ENCODE measurements at regions of chr15 and their contacts with region 1.

Region 1: GRCh38 chr15:85742186-85742821 is 52.4 kb downstream of the KLHL25 start:
- DNase-seq: no peak
- H3K4me3 ChIP-seq: no peak overlapping the region
- H3K27ac ChIP-seq: no peak overlapping the region
- H3K4me1 ChIP-seq: peaks cover 0 to 4% (median 0%) of the 10 kb centered on the region in 4 experiments; a peak in 2 of 7 replicates
- H3K27me3 ChIP-seq: no peaks in the 10 kb centered on the region
- CTCF ChIP-seq: no peak
- EP300 ChIP-seq: no peak
- POLR2A ChIP-seq: 0 out of 3 replicates have a peak, but pooled peaks of 1 of the 2 experiments have one; percentile 25
- RAD21 ChIP-seq: no peak

Region 2: GRCh38 chr15:85692873-85693272 is 49.4 kb before region 1 on chr15:
- CTCF ChIA-PET with region 1: no interaction called
- POLR2A ChIA-PET with region 1: no interaction called
- DNase-seq: no peak
- H3K4me3 ChIP-seq: no peak overlapping the region
- H3K27ac ChIP-seq: no peak overlapping the region
- H3K4me1 ChIP-seq: peaks cover 0 to 6% (median 6%) of the 10 kb centered on the region in 4 experiments; a peak in 4 of 7 replicates
- H3K27me3 ChIP-seq: no peaks in the 10 kb centered on the region
- CTCF ChIP-seq: no peak
- EP300 ChIP-seq: no peak
- POLR2A ChIP-seq: no peak
- RAD21 ChIP-seq: no peak

Region 3: DNA sequence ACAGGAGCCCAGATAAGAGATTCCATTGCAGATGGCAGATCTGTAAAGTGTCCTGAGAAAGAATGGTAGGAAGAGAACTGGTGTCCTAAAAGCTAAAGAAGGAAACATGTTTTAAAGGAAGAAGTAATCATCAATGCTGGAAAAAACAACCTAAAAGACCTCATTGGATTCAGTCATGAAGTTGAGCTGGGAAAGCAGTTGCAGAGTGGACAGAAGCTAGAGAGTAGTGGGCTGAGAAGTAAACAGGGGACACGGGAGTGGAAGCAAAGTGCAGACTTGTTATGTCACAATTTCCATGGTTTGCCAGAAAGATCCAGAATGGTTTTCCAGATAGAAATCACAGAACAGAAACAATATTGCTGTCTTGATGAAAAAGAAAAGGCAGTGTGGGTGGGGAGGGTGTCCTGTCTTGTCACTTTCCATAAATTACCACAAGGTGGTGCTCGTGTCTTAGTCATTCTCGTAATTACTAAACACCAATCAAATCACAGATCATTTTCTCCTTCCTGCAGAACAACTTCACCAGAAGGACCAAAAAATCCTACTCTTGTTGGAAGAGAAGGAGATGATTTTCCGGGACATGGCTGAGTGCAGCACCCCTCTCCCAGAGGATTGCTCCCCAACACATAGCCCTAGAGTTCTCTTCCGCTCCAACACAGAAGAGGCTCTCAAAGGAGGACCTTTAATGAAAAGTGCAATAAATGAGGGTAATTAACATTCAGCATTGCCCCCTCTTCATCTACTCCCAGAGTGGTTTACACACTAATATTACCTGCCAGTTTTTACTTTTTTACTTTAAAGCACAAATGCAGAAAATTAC is 12.1 kb before region 1 on chr15:
- CTCF ChIA-PET with region 1: interaction called, 20 read pairs
- POLR2A ChIA-PET with region 1: interaction called, 3 read pairs
- DNase-seq: no peak
- H3K4me3 ChIP-seq: no peak overlapping the region
- H3K27ac ChIP-seq: no peak overlapping the region
- H3K4me1 ChIP-seq: no peaks in the 10 kb centered on the region
- H3K27me3 ChIP-seq: no peaks in the 10 kb centered on the region
- CTCF ChIP-seq: peak in 2 of 3 experiments; percentile 53 to 74; a peak in 2 of 4 replicates
- EP300 ChIP-seq: no peak
- POLR2A ChIP-seq: no peak
- RAD21 ChIP-seq: peak; percentile 82 to 88

Region 4: GRCh38 chr15:85760531-85761371 is 18.4 kb after region 1 on chr15:
- CTCF ChIA-PET with region 1: no interaction called
- POLR2A ChIA-PET with region 1: no interaction called
- DNase-seq: no peak
- H3K4me3 ChIP-seq: no peak overlapping the region
- H3K27ac ChIP-seq: no peak overlapping the region
- H3K4me1 ChIP-seq: peaks cover 0 to 1% (median 0%) of the 10 kb centered on the region in 4 experiments; a peak in 2 of 7 replicates
- H3K27me3 ChIP-seq: no peaks in the 10 kb centered on the region
- CTCF ChIP-seq: no peak
- EP300 ChIP-seq: no peak
- POLR2A ChIP-seq: no peak
- RAD21 ChIP-seq: peak in 1 of 2 experiments; percentile 37; a peak in 2 of 4 replicates

Region 5: GRCh38 chr15:85831415-85832113 is 89.3 kb after region 1 on chr15:
- CTCF ChIA-PET with region 1: interaction called, 12 read pairs
- POLR2A ChIA-PET with region 1: no interaction called
- DNase-seq: peak in 1 of 2 experiments; percentile 71
- H3K4me3 ChIP-seq: no peak overlapping the region
- H3K27ac ChIP-seq: no peak overlapping the region
- H3K4me1 ChIP-seq: no peaks in the 10 kb centered on the region
- H3K27me3 ChIP-seq: 0 out of 7 replicates have a peak, but pooled peaks cover 0 to 2% (median 0%) of the 10 kb centered on the region in 4 experiments
- CTCF ChIP-seq: peak; percentile 73 to 80 (median 77)
- EP300 ChIP-seq: no peak
- POLR2A ChIP-seq: no peak
- RAD21 ChIP-seq: peak; percentile 74 to 79

Region 6: GRCh38 chr15:85840065-85840801 is 97.9 kb after region 1 on chr15:
- CTCF ChIA-PET with region 1: interaction called, 10 read pairs
- POLR2A ChIA-PET with region 1: no interaction called
- DNase-seq: peak; percentile 73 to 95
- H3K4me3 ChIP-seq: peak overlapping the region in 3 of 4 experiments; percentile 14 to 51 (median 30); a peak in 5 of 8 replicates
- H3K27ac ChIP-seq: no peak overlapping the region
- H3K4me1 ChIP-seq: peaks cover 0 to 4% (median 1%) of the 10 kb centered on the region in 4 experiments; a peak in 2 of 7 replicates
- H3K27me3 ChIP-seq: peaks cover 0 to 8% (median 3%) of the 10 kb centered on the region in 4 experiments; a peak in 3 of 7 replicates
- CTCF ChIP-seq: peak; percentile 78 to 96 (median 92)
- EP300 ChIP-seq: 0 out of 3 replicates have a peak, but pooled peaks of 1 of the 2 experiments have one; percentile 9
- POLR2A ChIP-seq: no peak
- RAD21 ChIP-seq: peak; percentile 70 to 79